ENCODE measurements at regions of chr11 and their contacts with region 1.

Region 1: GRCh38 chr11:73760679-73761402 is at the start of gene RAB6A:
- DNase-seq: peak; percentile 100
- H3K4me3 Mint-ChIP-seq: peak within 1 kb of the TSS; percentile 85
- H3K27ac Mint-ChIP-seq: peak within 1 kb of the TSS; percentile 83
- H3K4me1 Mint-ChIP-seq: peaks cover 24% of the 10 kb centered on the region
- H3K27me3 Mint-ChIP-seq: no peaks in the 10 kb centered on the region
- total RNA-seq, gene RAB6A: 66.0 to 71.0 TPM

Region 2: GRCh38 chr11:73779084-73779902 is 18.5 kb after region 1 on chr11:
- CTCF ChIA-PET with region 1: interaction called, 17 read pairs
- POLR2A ChIA-PET with region 1: interaction called, 37 read pairs
- intact Hi-C with region 1: loop called (anchors 1 kb)
- DNase-seq: peak; percentile 99
- H3K4me3 Mint-ChIP-seq: peak overlapping the region; percentile 87
- H3K27ac Mint-ChIP-seq: peak overlapping the region; percentile 97
- H3K4me1 Mint-ChIP-seq: peaks cover 11% of the 10 kb centered on the region
- H3K27me3 Mint-ChIP-seq: no peaks in the 10 kb centered on the region

Region 3: GRCh38 chr11:73787643-73788537 is 27.0 kb after region 1 on chr11 and contains the start of gene MRPL48:
- CTCF ChIA-PET with region 1: interaction called, 5 read pairs
- POLR2A ChIA-PET with region 1: interaction called, 14 read pairs
- intact Hi-C with region 1: loop called (anchors 2 kb)
- DNase-seq: peak; percentile 94
- H3K4me3 Mint-ChIP-seq: peak within 1 kb of the TSS; percentile 99
- H3K27ac Mint-ChIP-seq: peak within 1 kb of the TSS; percentile 97
- H3K4me1 Mint-ChIP-seq: peaks cover 18% of the 10 kb centered on the region
- H3K27me3 Mint-ChIP-seq: no peaks in the 10 kb centered on the region
- total RNA-seq, gene MRPL48: 43.4 to 45.7 TPM